ENCODE measurements at regions of chr16 and their contacts with region 1.

Region 1: DNA sequence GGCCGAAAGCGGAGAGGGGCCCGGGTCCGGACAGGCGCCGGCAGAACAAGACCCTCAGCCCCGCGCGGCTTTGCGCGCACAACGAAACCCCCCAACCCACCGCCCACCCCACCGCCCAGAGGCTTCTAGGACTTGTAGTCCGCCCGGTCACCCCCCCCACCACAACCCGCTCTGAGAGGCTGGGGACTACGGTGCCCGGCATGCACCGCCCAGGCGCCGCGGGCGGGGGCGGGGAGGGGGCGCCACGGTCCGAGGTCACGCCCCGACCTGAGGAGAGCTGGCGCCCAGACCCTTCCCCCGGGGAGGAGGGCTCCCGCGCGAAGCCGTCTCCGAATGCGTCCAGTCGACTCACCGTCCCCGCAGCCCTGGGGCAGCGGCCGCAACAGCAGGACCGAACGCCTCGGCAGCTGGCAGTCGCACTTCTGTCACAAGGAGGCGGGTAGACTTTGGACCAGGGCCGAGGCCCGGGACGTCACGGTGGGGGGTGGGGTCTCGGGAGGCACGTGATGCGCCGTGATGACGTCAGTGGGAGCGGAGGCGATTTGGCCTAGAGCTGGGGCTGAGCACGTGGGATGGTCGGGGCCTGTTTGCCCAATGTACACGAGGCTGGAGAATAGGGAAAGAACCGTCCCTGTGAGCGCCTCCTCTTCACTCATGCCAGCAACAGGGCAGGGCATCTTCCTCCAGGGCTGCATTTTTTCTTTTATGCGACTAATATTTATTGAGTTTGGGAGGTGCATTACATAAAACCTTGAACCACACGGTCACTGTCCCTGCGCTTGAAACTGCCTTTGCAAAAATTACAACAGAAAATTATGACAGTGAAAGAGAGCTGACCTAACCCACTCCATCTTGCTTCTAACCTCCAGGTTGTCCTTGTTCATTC is at the start of gene CDIP1:
- DNase-seq: peak; percentile 99
- H3K4me3 Mint-ChIP-seq: peak within 1 kb of the TSS; percentile 72
- H3K27ac Mint-ChIP-seq: peak within 1 kb of the TSS; percentile 12
- H3K4me1 Mint-ChIP-seq: peaks cover 33% of the 10 kb centered on the region
- H3K27me3 Mint-ChIP-seq: no peaks in the 10 kb centered on the region
- total RNA-seq, gene CDIP1: 25.7 to 27.5 TPM

Region 2: GRCh38 chr16:4616047-4616811 is 77.6 kb after region 1 on chr16:
- CTCF ChIA-PET with region 1: no interaction called
- POLR2A ChIA-PET with region 1: interaction called, 4 read pairs
- intact Hi-C with region 1: loop called (anchors 2 kb)
- DNase-seq: peak; percentile 100
- H3K4me3 Mint-ChIP-seq: peak overlapping the region; percentile 88
- H3K27ac Mint-ChIP-seq: peak overlapping the region; percentile 95
- H3K4me1 Mint-ChIP-seq: peaks cover 23% of the 10 kb centered on the region
- H3K27me3 Mint-ChIP-seq: no peaks in the 10 kb centered on the region

Measured in activated CD4-positive, alpha-beta memory T cell treated with anti-CD3 and anti-CD28 coated beads for 36 hours (primary cell).